Ascending aorta (tissue), 2 donors: ENCODE measurements at regions of chrX and their contacts with region 1.

Region 1: DNA sequence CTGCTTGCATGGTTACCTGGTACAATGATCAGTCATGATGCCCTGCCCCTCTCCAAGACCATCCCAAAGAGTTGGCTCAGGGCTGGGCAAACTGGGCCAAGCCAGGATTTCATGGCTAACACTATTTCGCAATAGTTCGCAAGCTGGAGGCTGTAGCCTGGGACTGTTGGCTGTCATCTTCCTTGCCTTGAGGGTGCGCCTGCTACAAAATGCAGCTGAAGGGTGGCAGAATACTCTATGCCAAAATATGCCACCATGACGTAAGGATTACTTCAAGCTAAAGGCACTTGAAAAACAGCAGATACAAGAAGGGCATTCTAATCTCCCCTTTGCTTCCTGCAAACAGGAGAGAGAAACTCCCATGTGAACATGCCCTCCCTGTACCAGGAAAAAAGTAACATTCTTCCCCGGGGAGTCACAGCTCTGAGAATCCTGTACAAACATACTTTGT is 21.0 kb downstream of the SAT1 start:
- DNase-seq: peak in 1 of 2 donors; percentile 75
- H3K4me3 ChIP-seq: no peak overlapping the region
- H3K27ac ChIP-seq: peak overlapping the region; percentile 24 to 58
- H3K4me1 ChIP-seq: no peaks in the 10 kb centered on the region
- H3K27me3 ChIP-seq: no peaks in the 10 kb centered on the region
- CTCF ChIP-seq: no peak

Region 2: DNA sequence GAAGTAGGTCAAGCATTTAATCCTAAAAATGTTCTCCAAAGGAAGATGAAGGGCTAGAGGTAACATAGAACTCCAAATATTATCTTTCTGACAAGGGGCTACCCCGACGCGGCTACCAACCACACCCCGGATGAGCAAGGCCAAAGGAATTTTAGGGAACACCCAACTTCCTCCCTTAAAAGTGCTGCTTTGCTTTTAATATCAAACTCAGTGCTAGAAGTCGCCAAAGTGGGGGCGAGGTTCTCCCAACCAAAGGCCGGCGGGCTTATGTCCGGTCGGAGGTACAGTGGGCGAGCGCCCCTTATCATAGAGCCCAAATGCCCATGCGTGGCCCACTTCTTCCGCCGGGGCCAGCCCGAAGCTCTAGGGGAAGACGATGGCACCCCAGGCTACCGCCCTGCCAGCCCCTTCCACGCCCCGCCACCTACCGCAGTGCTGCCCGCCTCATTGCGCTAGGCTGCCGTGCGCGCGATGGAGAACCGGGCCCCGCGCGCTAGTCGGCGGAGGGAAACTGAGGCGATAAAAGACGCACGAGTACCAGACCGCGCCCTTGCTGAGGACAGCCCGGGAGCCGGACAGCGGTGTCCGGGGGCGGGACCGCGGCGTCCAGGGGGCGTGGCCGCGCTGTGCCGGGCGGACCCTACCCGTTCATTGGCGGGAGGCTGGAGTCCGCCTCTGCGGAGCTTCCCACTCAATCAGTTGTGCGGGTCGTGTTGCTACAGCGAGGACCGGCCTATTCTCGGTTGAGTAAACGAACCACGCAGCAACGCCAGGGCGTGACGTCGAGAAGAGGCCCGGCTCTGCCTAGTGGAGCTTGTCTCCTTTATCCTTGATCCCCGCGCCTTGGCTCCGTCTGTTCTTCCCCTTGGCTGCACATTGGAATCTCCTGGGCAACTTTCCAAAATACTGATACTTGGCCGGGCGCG is 61.0 kb before region 1 on chrX and contains the start of gene ACOT9:
- intact Hi-C with region 1: loop called (anchors 5 kb)
- DNase-seq: peak; percentile 87 to 97
- H3K4me3 ChIP-seq: peak within 1 kb of the TSS; percentile 71 to 79
- H3K27ac ChIP-seq: peak within 1 kb of the TSS; percentile 93 to 98
- H3K4me1 ChIP-seq: no peaks in the 10 kb centered on the region
- H3K27me3 ChIP-seq: no peaks in the 10 kb centered on the region
- CTCF ChIP-seq: no peak
- total RNA-seq, gene ACOT9: 6.6 TPM

Region 3: DNA sequence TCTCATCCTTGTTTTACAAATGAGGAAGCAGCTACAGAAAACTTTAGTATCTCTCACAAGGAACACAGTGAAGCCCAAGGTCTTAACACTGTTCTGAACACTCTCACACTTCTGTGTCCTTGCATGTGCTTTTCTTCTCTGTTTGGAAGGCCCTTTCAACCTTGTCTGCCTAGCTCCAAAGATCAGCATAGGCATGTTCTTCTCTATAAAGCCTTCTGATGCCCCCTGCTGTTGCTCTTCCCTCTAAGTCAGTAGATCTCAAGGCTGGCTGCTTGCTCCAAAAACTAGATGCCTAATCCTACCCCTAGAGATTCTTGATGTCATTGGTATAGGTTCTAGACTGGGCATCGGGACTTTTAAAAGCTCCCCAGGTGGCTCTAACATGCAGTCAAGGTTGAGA is 97.8 kb after region 1 on chrX:
- intact Hi-C with region 1: loop called (anchors 5 kb)
- DNase-seq: peak in 1 of 2 donors; percentile 72
- H3K4me3 ChIP-seq: peak overlapping the region; percentile 29 to 42
- H3K27ac ChIP-seq: peak overlapping the region; percentile 6 to 65
- H3K4me1 ChIP-seq: peaks cover 0 to 13% of the 10 kb centered on the region in 2 donors
- H3K27me3 ChIP-seq: no peaks in the 10 kb centered on the region
- CTCF ChIP-seq: peak; percentile 45 to 57 (median 55)

Region 4: GRCh38 chrX:24054182-24055042 is 250.5 kb after region 1 on chrX and contains the start of gene EIF2S3:
- intact Hi-C with region 1: loop called (anchors 5 kb)
- DNase-seq: peak; percentile 70 to 95
- H3K4me3 ChIP-seq: no peak within 1 kb of the TSS
- H3K27ac ChIP-seq: peak within 1 kb of the TSS; percentile 87 to 93
- H3K4me1 ChIP-seq: peaks cover 0 to 13% of the 10 kb centered on the region in 2 donors
- H3K27me3 ChIP-seq: no peaks in the 10 kb centered on the region
- CTCF ChIP-seq: peak; percentile 28 to 77 (median 62)
- total RNA-seq, gene EIF2S3: 60.7 TPM